Activated B cell treated with CpG ODN at 0.5 μM for 24 hours (primary cell): ENCODE measurements at regions of chr1 and their contacts with region 1.

Region 1: DNA sequence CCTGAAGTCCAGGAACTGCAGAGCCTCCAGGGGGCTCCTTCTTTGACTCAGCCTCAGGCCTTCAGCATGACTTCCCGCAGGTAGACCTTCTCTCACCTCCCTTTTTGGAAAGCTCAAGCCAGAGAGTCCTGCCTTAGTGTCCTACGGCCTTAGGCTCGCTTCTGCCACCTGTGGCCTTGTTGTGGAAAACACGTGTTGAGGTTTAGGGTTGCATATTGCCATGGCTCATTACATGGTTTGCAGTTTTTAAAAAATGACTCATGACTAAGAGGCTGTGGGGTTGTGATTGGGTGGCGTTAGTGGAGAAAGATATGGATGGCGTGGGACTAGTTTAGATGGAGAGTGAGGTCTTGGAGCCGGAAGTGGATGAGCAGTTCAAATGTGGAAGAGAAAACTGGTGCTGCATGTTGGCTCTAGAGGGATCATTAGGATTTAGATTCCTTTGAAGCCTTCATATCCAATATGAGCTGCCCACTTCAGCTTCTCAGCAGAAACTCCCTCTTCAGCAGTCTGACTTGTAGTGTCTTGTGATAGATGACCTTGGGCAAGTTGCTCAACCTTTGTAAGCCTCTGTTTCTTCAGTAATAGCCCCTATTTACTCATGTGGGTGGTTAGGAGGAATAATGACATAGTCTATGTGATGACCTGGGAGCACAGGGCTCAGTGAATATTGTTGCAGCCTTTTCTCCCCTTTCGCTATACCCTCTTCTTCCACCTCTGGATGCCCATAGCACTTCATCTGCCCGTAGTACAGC is 6.5 kb upstream of the FGGY start:
- DNase-seq: no peak
- ATAC-seq: peak; percentile 67
- H3K4me3 Mint-ChIP-seq: no peak overlapping the region
- H3K27ac Mint-ChIP-seq: peak overlapping the region; percentile 15
- H3K4me1 Mint-ChIP-seq: peaks cover 37% of the 10 kb centered on the region
- H3K27me3 Mint-ChIP-seq: no peaks in the 10 kb centered on the region
- CTCF ChIP-seq: no peak

Region 2: GRCh38 chr1:59146651-59147358 is 143.6 kb before region 1 on chr1:
- CTCF ChIA-PET with region 1: interaction called, 3 read pairs
- POLR2A ChIA-PET with region 1: no interaction called
- intact Hi-C with region 1: loop called (anchors 1 kb)
- DNase-seq: peak; percentile 64
- ATAC-seq: peak; percentile 84
- H3K4me3 Mint-ChIP-seq: peak overlapping the region; percentile 85
- H3K27ac Mint-ChIP-seq: peak overlapping the region; percentile 82
- H3K4me1 Mint-ChIP-seq: peaks cover 46% of the 10 kb centered on the region
- H3K27me3 Mint-ChIP-seq: no peaks in the 10 kb centered on the region
- CTCF ChIP-seq: no peak

Region 3: DNA sequence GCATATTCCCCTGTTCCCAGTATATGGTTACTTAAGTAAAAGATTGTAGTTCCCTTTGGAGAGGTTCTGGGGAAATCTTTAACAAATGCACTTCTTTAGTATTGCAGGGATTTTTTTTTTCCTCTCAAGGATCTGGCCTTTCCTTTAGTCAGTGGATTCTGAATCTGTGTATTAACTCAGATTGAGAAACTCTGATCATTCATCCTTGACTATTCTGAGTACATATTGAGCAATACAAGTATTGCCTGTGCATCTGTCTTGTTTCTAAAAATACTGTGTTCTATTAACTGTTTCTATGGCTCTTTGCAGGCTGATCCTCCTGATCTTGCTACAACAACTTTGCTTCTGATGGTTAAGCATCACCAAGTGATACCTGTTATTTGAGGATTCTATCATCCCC is 61.2 kb before region 1 on chr1:
- CTCF ChIA-PET with region 1: interaction called, 4 read pairs
- POLR2A ChIA-PET with region 1: no interaction called
- intact Hi-C with region 1: loop called (anchors 2 kb)
- DNase-seq: no peak
- ATAC-seq: no peak
- H3K4me3 Mint-ChIP-seq: no peak overlapping the region
- H3K27ac Mint-ChIP-seq: no peak overlapping the region
- H3K4me1 Mint-ChIP-seq: no peaks in the 10 kb centered on the region
- H3K27me3 Mint-ChIP-seq: no peaks in the 10 kb centered on the region
- CTCF ChIP-seq: no peak

Region 4: DNA sequence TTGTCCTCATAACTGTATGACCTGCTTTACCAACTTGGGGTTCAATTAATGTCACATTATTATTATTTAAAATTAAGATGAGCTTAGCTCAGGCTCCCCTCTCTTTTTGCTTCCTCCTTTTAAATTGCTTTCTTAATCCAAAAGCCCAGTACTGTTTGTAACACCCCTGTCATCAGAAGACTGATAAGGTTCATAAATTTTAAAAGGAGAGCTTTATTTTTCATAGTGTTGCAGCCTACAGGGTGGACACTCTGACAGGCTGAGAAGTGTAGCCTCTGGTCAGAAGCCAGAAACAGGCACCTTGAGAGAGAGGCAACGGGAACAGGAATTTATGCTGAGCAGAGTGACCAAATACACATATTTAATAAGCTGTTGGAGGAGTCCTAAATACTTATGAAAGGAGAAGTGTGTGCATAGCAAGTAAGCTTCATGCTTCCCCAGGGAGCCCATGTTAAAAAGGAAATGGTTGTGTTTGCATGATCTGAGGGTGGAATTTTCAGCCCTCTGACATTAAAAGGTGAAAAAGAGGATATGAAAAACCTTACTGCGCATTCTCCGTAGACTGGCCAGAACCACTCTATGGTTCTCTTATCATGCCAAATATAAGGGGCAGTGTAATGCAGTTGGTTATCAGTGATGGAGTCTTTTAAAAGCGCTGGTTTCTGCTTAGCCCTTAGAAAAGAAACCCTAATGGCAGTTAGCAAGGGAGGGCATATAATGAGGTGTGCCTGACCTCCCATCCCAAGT is 24.0 kb before region 1 on chr1:
- CTCF ChIA-PET with region 1: interaction called, 11 read pairs
- POLR2A ChIA-PET with region 1: interaction called, 39 read pairs
- intact Hi-C with region 1: loop called (anchors 1 kb)
- DNase-seq: peak; percentile 21
- ATAC-seq: peak; percentile 92
- H3K4me3 Mint-ChIP-seq: peak overlapping the region; percentile 75
- H3K27ac Mint-ChIP-seq: peak overlapping the region; percentile 97
- H3K4me1 Mint-ChIP-seq: peaks cover 63% of the 10 kb centered on the region
- H3K27me3 Mint-ChIP-seq: no peaks in the 10 kb centered on the region
- CTCF ChIP-seq: no peak

Region 5: DNA sequence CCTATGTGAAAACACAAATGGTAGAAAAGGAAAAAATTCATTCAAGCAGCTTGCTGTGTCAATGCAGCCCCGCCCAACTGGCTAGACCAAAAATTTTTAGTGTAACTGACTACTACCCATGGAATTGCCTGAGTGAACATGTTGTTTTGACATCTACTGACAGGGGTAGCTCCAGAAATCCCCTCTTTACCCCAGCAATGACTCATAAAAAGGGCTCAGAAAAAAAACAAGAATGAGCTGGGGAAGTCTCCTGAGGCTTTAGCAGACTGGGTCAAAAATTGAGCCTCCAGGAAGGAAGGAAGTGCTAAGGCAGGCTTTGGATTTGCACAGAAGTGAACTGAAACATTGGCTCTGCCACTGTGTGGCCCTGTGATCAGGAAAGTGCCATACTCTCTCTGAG is 17.9 kb before region 1 on chr1:
- CTCF ChIA-PET with region 1: interaction called, 11 read pairs
- POLR2A ChIA-PET with region 1: interaction called, 39 read pairs
- intact Hi-C with region 1: loop called (anchors 1 kb)
- DNase-seq: no peak
- ATAC-seq: peak; percentile 94
- H3K4me3 Mint-ChIP-seq: peak overlapping the region; percentile 57
- H3K27ac Mint-ChIP-seq: peak overlapping the region; percentile 84
- H3K4me1 Mint-ChIP-seq: peaks cover 57% of the 10 kb centered on the region
- H3K27me3 Mint-ChIP-seq: no peaks in the 10 kb centered on the region
- CTCF ChIP-seq: no peak

Region 6: DNA sequence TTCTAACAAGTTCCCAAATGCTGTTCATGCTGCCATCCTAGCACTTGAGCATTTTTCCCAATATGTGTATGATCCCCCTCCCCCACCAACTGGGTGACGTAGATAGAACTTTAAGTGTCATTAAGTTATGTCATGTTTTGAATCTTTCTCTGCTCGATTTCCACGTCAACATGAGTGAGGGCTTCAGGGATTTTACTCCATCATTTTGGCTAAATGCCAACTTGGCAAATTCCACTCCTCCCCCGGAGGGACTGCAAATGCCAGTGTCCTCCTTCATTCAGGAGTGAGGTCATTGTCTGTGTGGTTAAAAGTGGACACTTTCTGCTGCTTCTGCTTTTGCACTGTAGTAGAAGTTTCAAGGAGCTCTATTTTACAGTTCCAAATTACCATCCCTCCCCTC is 208.3 kb after region 1 on chr1:
- CTCF ChIA-PET with region 1: no interaction called
- POLR2A ChIA-PET with region 1: no interaction called
- intact Hi-C with region 1: no loop called
- DNase-seq: no peak
- ATAC-seq: no peak
- H3K4me3 Mint-ChIP-seq: no peak overlapping the region
- H3K27ac Mint-ChIP-seq: no peak overlapping the region
- H3K4me1 Mint-ChIP-seq: peaks cover 8% of the 10 kb centered on the region
- H3K27me3 Mint-ChIP-seq: no peaks in the 10 kb centered on the region
- CTCF ChIP-seq: no peak